Caco-2 (cell line): ENCODE measurements at regions of chr14 and their contacts with region 1.

Region 1: GRCh38 chr14:97149775-97150174 is 352.6 kb downstream of the VRK1 start:
- DNase-seq: no peak
- H3K4me3 ChIP-seq: no peak overlapping the region
- H3K4me3 Mint-ChIP-seq: no peak overlapping the region
- H3K27ac Mint-ChIP-seq: no peak overlapping the region
- H3K4me1 ChIP-seq: no peaks in the 10 kb centered on the region
- H3K4me1 Mint-ChIP-seq: no peaks in the 10 kb centered on the region
- H3K27me3 ChIP-seq: no peaks in the 10 kb centered on the region
- H3K27me3 Mint-ChIP-seq: peaks cover 10% of the 10 kb centered on the region
- CTCF ChIP-seq: no peak

Region 2: DNA sequence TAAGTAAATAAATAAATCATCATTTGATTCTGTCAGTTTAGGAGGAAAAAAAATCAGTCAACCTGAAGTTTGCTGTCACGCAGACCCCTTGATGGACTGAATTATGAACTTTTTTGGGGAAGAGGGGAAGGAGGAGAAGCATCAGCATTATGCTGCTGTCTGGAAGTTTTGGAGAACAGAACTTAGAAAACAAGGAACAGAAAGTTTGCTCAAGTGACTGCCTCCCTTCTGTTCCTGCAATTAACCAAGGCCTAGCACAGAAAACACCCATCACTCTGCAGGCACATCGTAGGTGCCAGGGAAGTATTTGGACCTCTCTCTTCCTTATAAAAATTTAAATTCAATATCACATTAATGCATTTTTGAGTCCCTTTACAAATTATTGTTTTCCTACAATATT is 68.8 kb before region 1 on chr14:
- CTCF ChIA-PET with region 1: no interaction called
- POLR2A ChIA-PET with region 1: no interaction called
- intact Hi-C with region 1: no loop called
- DNase-seq: no peak
- H3K4me3 ChIP-seq: no peak overlapping the region
- H3K4me3 Mint-ChIP-seq: no peak overlapping the region
- H3K27ac Mint-ChIP-seq: no peak overlapping the region
- H3K4me1 ChIP-seq: no peaks in the 10 kb centered on the region
- H3K4me1 Mint-ChIP-seq: no peaks in the 10 kb centered on the region
- H3K27me3 ChIP-seq: no peaks in the 10 kb centered on the region
- H3K27me3 Mint-ChIP-seq: peaks cover 5% of the 10 kb centered on the region
- CTCF ChIP-seq: no peak

Region 3: GRCh38 chr14:97120611-97121031 is 29.2 kb before region 1 on chr14:
- CTCF ChIA-PET with region 1: no interaction called
- POLR2A ChIA-PET with region 1: no interaction called
- intact Hi-C with region 1: loop called (anchors 1 kb)
- DNase-seq: no peak
- H3K4me3 ChIP-seq: no peak overlapping the region
- H3K4me3 Mint-ChIP-seq: no peak overlapping the region
- H3K27ac Mint-ChIP-seq: no peak overlapping the region
- H3K4me1 ChIP-seq: no peaks in the 10 kb centered on the region
- H3K4me1 Mint-ChIP-seq: no peaks in the 10 kb centered on the region
- H3K27me3 ChIP-seq: peaks cover 1% of the 10 kb centered on the region; the same call in 1 of the 2 replicates
- H3K27me3 Mint-ChIP-seq: peaks cover 13% of the 10 kb centered on the region
- CTCF ChIP-seq: no peak